ENCODE measurements at regions of chr7 and their contacts with region 1.

Region 1: GRCh38 chr7:98930921-98931320 is 52.6 kb downstream of the TRRAP start:
- DNase-seq: no peak
- ATAC-seq: no peak
- H3K4me3 ChIP-seq: no peak overlapping the region
- H3K27ac ChIP-seq: no peak overlapping the region
- H3K4me1 ChIP-seq: no peaks in the 10 kb centered on the region
- H3K27me3 ChIP-seq: no peaks in the 10 kb centered on the region
- CTCF ChIP-seq: no peak
- POLR2A ChIP-seq: no peak

Region 2: GRCh38 chr7:98993024-98993897 is 62.3 kb after region 1 on chr7:
- intact Hi-C with region 1: loop called in 1 of 10 experiments (anchors 10 kb)
- DNase-seq: peak in 1 of 5 donors; percentile 10
- ATAC-seq: no peak
- H3K4me3 ChIP-seq: no peak overlapping the region
- H3K27ac ChIP-seq: no peak overlapping the region
- H3K4me1 ChIP-seq: no peaks in the 10 kb centered on the region
- H3K27me3 ChIP-seq: no peaks in the 10 kb centered on the region
- CTCF ChIP-seq: no peak
- POLR2A ChIP-seq: no peak

Measured in heart left ventricle (tissue), 16 donors.